Activated CD4-positive, alpha-beta memory T cell treated with anti-CD3 and anti-CD28 coated beads, Interleukin-2, amount 10 ng/mL, durations not matched to agents 7 days and 5 days (primary cell): ENCODE measurements at regions of chr11 and their contacts with region 1.

Region 1: DNA sequence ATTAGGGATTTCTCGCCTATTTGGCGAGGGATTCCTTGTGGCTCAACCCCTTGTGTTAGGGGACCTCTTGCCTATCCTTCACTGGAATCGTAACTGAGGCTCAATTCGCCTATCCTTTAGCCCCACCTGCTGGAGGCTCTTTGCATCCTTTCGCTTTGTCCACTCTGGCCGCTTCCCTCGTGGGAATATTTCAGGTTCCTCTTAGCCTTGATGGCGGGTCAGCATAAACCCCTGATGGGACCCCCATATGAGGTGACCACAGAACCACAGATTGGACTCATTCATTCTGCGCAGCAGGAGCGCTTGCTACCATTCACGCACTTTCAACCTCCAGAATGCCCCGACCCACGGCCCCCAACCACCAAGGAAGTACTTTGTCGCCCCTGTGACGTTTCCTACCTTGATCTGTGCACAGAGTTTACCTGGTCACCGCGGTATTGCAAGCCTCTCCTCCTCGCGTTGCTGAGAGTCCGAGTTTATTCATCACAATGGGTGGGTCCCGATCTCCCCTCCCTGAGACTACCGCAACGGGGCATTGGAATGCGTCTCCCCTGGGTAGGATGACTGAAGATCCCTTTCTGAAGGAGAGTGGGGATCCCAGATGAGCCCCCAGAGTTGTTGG is at the start of gene OR52N2:
- DNase-seq: peak; percentile 74
- H3K4me3 Mint-ChIP-seq: peak within 1 kb of the TSS; percentile 84
- H3K27ac Mint-ChIP-seq: peak within 1 kb of the TSS; percentile 5
- H3K4me1 Mint-ChIP-seq: peaks cover 9% of the 10 kb centered on the region
- H3K27me3 Mint-ChIP-seq: peaks cover 21% of the 10 kb centered on the region
- total RNA-seq, gene OR52N2: not detected

Region 2: DNA sequence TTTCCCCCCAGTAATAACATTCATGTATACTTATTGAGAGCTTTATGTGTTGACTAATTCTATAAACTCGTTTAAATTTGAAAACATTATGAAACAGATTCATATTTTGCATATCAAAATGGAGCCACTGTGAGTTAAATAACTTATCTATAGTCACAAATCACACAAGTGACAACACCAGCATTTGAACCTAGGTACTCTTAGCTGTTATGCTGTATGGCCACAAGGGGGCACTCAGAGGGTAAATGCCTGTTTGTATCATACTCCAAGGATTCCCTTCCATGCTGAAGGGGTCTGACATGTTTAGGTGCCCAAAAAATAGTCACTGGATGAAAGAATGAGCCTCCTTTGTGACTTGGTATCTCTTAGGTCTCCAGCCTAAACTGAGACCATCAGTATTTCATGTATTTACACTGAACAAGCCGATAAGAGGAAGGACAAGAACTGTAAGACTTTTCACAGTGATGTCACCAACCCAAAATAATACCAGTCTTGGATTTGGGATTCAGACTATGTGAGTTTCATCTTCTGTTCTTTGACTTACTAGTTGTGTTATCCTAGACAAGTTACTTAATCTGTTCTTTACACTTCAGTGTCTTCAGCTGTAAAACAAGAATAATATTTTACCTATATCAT is 332.3 kb before region 1 on chr11:
- CTCF ChIA-PET with region 1: interaction called, 20 read pairs
- POLR2A ChIA-PET with region 1: no interaction called
- DNase-seq: peak; percentile 43
- H3K4me3 Mint-ChIP-seq: no peak overlapping the region
- H3K27ac Mint-ChIP-seq: no peak overlapping the region
- H3K4me1 Mint-ChIP-seq: no peaks in the 10 kb centered on the region
- H3K27me3 Mint-ChIP-seq: peaks cover 8% of the 10 kb centered on the region

Region 3: DNA sequence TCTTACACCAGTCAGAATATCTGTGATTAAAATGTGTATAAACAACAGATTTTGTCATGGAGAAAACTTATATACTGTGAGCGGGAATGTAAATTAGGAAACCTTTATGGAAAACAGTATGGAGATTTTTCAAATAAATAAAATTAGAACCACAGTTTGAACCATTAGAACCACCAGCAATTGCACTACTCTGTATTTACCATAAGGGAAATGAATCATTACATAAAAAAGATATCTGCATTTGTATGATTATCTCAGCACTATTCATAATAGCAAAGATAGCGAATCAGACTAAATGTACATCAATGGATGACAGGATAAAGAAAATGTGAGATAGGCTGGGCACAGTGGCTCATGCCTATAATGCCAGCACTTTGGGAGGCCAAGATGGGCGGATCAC is 62.0 kb before region 1 on chr11:
- CTCF ChIA-PET with region 1: no interaction called
- POLR2A ChIA-PET with region 1: no interaction called
- DNase-seq: no peak
- H3K4me3 Mint-ChIP-seq: no peak overlapping the region
- H3K27ac Mint-ChIP-seq: no peak overlapping the region
- H3K4me1 Mint-ChIP-seq: no peaks in the 10 kb centered on the region
- H3K27me3 Mint-ChIP-seq: peaks cover 2% of the 10 kb centered on the region

Region 4: DNA sequence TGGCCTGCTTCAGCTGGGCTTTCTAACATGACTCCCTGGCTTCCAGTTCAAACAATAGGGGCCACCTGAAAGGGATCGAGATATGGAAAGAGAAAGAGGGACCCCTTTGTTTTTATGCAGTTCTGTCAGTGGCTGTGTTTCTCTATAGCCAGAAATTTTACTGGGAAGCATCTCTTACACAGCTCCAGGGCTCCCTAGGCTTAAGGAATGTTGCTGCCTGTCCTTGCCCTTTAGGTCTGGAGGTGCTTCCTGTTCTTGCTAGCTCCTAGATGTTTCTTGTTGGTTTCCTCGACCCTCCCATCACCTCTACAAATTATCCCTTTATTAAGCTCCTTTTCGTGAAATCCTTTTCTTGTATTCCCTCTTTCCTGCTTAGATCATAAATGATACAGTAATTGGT is 243.8 kb after region 1 on chr11:
- CTCF ChIA-PET with region 1: no interaction called
- POLR2A ChIA-PET with region 1: no interaction called
- DNase-seq: no peak
- H3K4me3 Mint-ChIP-seq: no peak overlapping the region
- H3K27ac Mint-ChIP-seq: no peak overlapping the region
- H3K4me1 Mint-ChIP-seq: no peaks in the 10 kb centered on the region
- H3K27me3 Mint-ChIP-seq: peaks cover 15% of the 10 kb centered on the region